HepG2 (cell line): ENCODE measurements at regions of chr13 and their contacts with region 1.

Region 1: DNA sequence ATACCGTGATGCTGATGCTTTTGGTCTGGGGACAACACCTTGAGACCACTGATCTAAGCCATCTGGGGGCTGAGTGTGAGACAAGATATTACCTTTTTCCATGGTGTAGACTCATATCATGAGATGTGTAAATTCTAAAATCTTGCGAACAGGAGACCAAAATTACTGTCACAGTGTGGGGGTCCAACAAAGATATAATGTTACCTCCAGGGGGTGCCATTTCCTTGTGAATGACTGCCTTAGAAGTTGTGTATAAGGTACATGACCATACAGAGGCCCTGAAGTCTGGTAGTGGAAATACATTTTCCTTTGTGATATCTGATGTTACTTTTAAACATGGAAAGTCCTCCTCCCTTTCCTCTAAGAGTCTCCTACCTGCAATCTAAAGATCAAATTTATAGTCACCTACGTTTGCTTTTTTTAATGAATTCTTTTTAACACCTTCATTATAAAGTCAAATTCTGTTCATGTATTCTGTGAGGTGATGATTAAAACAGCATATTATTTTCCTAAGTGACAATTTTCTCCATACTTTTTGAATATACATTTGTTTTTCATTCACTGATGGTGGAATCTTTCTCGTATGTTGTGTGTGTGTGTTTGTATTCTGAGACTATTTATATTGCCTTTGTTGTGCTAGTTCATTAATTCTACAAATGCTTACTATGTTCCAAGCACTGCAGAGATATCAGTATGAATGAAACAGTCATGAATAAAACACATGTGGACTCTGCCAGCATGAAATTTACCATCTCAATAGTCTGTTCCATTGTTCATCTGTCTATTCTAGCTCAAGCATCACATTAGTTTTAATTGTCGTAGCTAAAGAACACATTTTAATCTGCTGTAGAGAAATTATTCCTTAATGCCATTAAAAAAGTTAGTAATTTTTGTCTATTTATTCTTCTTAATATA is 113.7 kb downstream of the RFC3 start:
- DNase-seq: peak; percentile 65
- ATAC-seq: peak; percentile 96
- H3K4me3 ChIP-seq: no peak overlapping the region
- H3K27ac ChIP-seq: no peak overlapping the region
- H3K4me1 ChIP-seq: peaks cover 4% of the 10 kb centered on the region
- H3K27me3 ChIP-seq: no peaks in the 10 kb centered on the region
- CTCF ChIP-seq: peak; percentile 64
- EP300 ChIP-seq: no peak
- POLR2A ChIP-seq: no peak
- RAD21 ChIP-seq: peak; percentile 88

Region 2: GRCh38 chr13:33799950-33800592 is 131.6 kb before region 1 on chr13:
- CTCF ChIA-PET with region 1: no interaction called
- POLR2A ChIA-PET with region 1: no interaction called
- in situ Hi-C with region 1: no loop called
- intact Hi-C with region 1: loop called (anchors 2 kb)
- DNase-seq: peak; percentile 38
- ATAC-seq: peak; percentile 79
- H3K4me3 ChIP-seq: no peak overlapping the region
- H3K27ac ChIP-seq: no peak overlapping the region
- H3K4me1 ChIP-seq: peaks cover 13% of the 10 kb centered on the region; the same call in 1 of the 2 replicates
- H3K27me3 ChIP-seq: no peaks in the 10 kb centered on the region
- CTCF ChIP-seq: peak; percentile 64
- EP300 ChIP-seq: no peak
- POLR2A ChIP-seq: no peak
- RAD21 ChIP-seq: no peak

Region 3: GRCh38 chr13:34462843-34463242 is 531.2 kb after region 1 on chr13:
- CTCF ChIA-PET with region 1: no interaction called
- POLR2A ChIA-PET with region 1: no interaction called
- in situ Hi-C with region 1: no loop called
- intact Hi-C with region 1: no loop called
- DNase-seq: no peak
- ATAC-seq: no peak
- H3K4me3 ChIP-seq: no peak overlapping the region
- H3K27ac ChIP-seq: no peak overlapping the region
- H3K4me1 ChIP-seq: no peaks in the 10 kb centered on the region
- H3K27me3 ChIP-seq: no peaks in the 10 kb centered on the region
- CTCF ChIP-seq: no peak
- EP300 ChIP-seq: no peak
- POLR2A ChIP-seq: no peak
- RAD21 ChIP-seq: no peak